Dendritic cell treated with granulocyte-macrophage colony-stimulating factor and Interleukin-4, amounts not matched to agents 40 ng/mL and 50 ng/mL, for 4 days (primary cell): ENCODE measurements at regions of chr6 and their contacts with region 1.

Region 1: DNA sequence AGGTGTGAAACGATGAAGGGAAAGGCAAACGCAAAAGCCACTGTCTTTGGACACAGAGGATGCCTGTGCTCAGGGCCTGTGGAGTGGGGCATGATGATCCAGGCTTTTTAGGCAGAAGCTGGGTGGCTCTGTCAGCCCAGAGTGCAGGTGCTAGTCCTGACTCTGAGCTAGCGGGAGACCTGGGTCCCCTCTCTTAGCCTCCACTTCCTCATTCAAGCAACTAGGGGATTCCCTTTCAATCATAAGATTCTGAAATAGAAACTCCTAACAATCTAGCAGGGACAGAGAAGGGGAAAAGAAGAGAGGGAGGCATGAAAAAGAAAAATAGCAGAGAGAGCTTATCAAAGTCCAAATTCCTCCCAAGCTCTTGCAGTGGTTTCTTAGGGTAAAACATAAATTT is 7.6 kb upstream of the HIVEP2 start:
- H3K4me3 Mint-ChIP-seq: no peak overlapping the region
- H3K27ac Mint-ChIP-seq: no peak overlapping the region
- H3K4me1 Mint-ChIP-seq: peaks cover 49% of the 10 kb centered on the region
- H3K27me3 Mint-ChIP-seq: peaks cover 19% of the 10 kb centered on the region

Region 2: GRCh38 chr6:142935553-142936517 is 16.8 kb before region 1 on chr6:
- intact Hi-C with region 1: no loop called
- H3K4me3 Mint-ChIP-seq: no peak overlapping the region
- H3K27ac Mint-ChIP-seq: no peak overlapping the region
- H3K4me1 Mint-ChIP-seq: peaks cover 5% of the 10 kb centered on the region
- H3K27me3 Mint-ChIP-seq: no peaks in the 10 kb centered on the region

Region 3: DNA sequence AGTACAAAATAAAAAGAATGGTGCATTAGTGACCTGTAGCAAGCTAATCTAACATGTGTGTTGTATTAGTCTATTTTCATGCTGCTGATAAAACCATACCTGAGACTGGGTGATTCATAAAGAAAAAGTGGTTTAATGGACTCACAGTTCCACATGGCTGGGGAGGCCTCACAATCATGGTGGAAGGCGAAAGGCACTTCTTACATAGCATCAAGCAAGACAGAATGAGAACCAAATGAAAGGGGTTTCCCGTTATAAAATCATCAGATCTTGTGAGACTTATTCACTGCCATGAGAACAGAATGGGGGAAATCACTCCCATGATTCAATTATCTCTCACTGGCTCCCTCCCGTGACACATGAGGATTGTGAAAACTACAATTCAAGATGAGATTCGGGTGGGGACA is 62.7 kb after region 1 on chr6:
- intact Hi-C with region 1: loop called (anchors 10 kb)
- H3K4me3 Mint-ChIP-seq: no peak overlapping the region
- H3K27ac Mint-ChIP-seq: no peak overlapping the region
- H3K4me1 Mint-ChIP-seq: no peaks in the 10 kb centered on the region
- H3K27me3 Mint-ChIP-seq: no peaks in the 10 kb centered on the region